Esophagus muscularis mucosa (tissue), 4 donors: ENCODE measurements at regions of chr22 and their contacts with region 1.

Region 1: DNA sequence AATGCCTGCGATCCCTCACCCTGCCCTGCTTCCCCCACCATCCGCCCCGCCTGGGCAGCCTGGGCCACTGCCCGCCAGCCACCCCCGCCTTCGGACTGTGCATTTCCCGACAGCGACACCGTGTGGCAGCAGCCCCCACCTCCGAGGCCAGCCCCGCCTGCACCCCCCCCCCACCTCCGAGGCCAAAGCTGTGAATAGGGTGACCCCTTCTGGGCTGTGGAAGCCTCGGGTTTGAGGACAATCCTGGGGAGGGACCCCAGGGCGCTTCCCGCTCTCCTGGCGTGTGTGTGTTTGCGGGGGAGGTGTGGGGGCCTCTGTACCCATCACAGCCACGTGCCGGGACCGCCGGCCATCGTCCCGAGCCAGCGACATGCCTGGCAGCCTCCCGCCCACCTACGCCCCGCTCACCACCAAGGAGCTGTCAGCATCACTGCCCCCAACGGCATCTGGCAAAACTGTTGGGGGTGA is 33.8 kb upstream of the PPARA start:
- DNase-seq: peak; percentile 99
- H3K4me3 ChIP-seq: no peak overlapping the region
- H3K27ac ChIP-seq: peak overlapping the region; percentile 79 to 85 (median 82)
- H3K4me1 ChIP-seq: peaks cover 53 to 75% (median 70%) of the 10 kb centered on the region in 4 donors
- H3K27me3 ChIP-seq: no peaks in the 10 kb centered on the region
- CTCF ChIP-seq: peak; percentile 94 to 98 (median 96)
- EP300 ChIP-seq: no peak
- POLR2A ChIP-seq: no peak

Region 2: DNA sequence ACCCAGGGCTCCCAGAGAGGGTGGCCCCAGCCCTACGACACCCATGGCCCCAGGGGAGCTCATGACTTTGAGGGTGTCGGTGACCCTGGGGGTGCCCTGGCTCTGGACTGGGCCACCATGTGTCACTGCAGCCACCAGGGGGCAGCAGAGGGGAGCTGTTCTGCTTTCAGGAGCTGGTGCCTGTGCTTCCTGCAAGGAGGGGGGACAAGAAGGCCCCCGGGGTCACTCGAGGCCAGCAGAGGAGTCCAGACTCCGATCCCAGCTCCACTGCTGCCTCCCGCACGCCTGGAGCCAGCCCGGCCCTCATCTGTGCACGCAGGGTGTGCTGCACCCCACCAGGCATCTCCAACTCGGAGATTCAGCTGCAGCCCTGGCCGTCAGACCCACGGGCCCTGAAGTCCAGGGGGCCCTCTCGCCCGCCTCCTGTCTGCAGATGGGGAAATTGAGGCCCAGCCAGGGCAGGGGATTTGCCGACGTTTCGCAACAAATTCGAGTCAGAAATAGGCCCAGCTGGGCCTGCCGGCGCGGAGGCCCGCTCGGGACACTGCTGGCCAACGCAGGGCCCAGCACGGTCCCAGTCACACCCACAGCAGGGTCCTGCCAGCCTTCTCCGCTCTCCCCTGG is 110.0 kb before region 1 on chr22:
- intact Hi-C with region 1: loop called (anchors 1 kb)
- DNase-seq: peak; percentile 97
- H3K4me3 ChIP-seq: peak overlapping the region; percentile 15 to 37 (median 22)
- H3K27ac ChIP-seq: peak overlapping the region; percentile 84 to 97 (median 92)
- H3K4me1 ChIP-seq: peaks cover 44 to 70% (median 56%) of the 10 kb centered on the region in 4 donors
- H3K27me3 ChIP-seq: no peaks in the 10 kb centered on the region
- CTCF ChIP-seq: peak; percentile 87 to 97 (median 95)
- EP300 ChIP-seq: no peak
- POLR2A ChIP-seq: peak; percentile 5

Region 3: DNA sequence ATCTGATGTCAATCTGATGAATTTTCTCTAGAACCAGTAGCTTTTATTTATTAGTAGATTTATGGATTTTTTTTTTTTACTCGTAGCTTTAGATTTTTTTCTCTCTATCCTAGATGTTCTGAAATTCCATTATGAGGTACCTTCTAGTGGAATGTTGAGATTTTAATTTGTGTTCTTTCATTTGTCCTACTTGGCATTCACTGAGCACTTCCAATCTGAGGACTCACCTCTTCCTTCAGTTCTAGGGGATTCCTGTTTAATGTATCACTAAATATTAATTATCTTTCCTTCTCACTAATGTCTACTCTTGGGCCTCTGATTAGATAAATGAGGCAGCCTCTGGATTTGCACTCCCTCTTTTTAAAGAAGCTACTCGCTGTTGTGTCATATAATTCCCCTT is 99.4 kb before region 1 on chr22:
- intact Hi-C with region 1: no loop called
- DNase-seq: no peak
- H3K4me3 ChIP-seq: no peak overlapping the region
- H3K27ac ChIP-seq: no peak overlapping the region
- H3K4me1 ChIP-seq: peaks cover 20 to 29% (median 26%) of the 10 kb centered on the region in 4 donors
- H3K27me3 ChIP-seq: no peaks in the 10 kb centered on the region
- CTCF ChIP-seq: no peak
- EP300 ChIP-seq: no peak
- POLR2A ChIP-seq: no peak